Activated naive CD4-positive, alpha-beta T cell treated with anti-CD3 and anti-CD28 coated beads, Interleukin-2, amount 10 ng/mL, durations not matched to agents 7 days and 5 days (primary cell): ENCODE measurements at regions of chr7 and their contacts with region 1.

Region 1: DNA sequence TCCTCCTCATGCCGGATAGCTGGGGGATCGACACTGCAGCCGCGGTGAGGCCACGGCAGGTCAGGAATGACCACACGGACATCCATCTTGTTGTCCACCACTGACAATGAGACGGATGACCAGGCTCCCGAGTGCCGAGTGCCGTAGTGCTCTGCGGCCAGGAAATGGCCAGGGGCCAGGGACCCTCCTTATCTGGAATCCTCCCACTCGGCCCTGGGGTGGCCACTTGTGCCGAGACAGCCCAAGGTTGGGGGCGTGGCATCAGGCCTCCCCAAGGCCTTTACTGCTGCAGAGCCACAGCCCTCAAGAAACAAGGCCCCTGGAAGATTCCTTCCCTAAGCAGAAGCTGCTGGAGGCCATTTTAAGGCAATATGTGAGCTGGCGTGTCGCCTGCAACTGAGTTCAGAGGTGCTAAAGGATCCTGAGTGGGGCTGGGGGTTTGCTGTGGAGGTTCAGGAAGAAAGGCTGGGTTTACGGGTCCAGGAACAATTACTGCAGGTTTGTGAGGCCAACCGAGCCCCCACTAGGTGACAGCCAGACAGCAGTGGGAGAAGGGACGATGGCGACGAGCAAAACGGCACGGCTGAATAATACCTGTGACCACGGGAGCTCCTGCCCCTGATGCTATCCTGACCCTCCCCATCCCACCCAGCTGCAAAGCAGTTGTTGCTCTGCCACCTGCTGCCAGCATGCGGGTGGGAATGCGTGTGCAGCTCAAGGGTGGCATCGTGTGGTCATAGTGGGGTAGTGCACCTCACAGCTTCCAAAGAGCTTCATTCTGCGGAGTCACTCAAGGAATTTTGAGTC is 31.6 kb upstream of the LEP start:
- DNase-seq: peak; percentile 74
- H3K4me3 Mint-ChIP-seq: no peak overlapping the region
- H3K27ac Mint-ChIP-seq: no peak overlapping the region
- H3K4me1 Mint-ChIP-seq: no peaks in the 10 kb centered on the region
- H3K27me3 Mint-ChIP-seq: peaks cover 50% of the 10 kb centered on the region

Region 2: GRCh38 chr7:128035712-128036111 is 173.7 kb before region 1 on chr7:
- CTCF ChIA-PET with region 1: interaction called, 33 read pairs
- DNase-seq: no peak
- H3K4me3 Mint-ChIP-seq: no peak overlapping the region
- H3K27ac Mint-ChIP-seq: no peak overlapping the region
- H3K4me1 Mint-ChIP-seq: peaks cover 6% of the 10 kb centered on the region
- H3K27me3 Mint-ChIP-seq: peaks cover 34% of the 10 kb centered on the region

Region 3: DNA sequence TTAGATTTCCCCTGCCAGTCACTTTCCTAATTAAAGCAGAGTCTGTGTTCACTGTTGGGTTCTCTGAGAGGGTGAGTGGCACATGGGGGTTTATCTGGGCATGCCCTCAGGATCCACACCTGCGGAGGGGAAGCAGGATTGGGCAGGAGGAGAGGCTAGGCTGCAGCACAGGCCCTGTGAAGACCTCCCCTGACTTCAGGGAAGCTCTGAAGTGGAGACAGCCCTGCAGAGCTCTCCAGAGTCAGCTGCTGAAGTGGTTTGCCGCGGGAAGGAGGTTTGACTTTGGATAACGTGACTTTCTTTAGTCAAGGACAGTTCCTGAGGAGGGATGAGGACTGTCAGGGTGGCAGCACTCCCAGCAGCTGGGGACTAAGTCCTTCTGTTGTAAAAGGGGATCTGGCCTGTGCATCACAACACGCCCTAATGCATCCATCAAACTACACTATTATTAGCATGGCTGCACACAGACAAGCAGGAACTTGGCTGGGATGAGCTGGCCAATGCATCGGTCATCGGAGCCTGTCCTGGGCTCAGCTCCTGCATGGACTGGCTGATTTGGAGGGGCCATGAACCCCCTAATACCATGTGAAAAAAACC is 19.3 kb before region 1 on chr7:
- CTCF ChIA-PET with region 1: interaction called, 15 read pairs
- DNase-seq: no peak
- H3K4me3 Mint-ChIP-seq: no peak overlapping the region
- H3K27ac Mint-ChIP-seq: no peak overlapping the region
- H3K4me1 Mint-ChIP-seq: no peaks in the 10 kb centered on the region
- H3K27me3 Mint-ChIP-seq: peaks cover 45% of the 10 kb centered on the region

Region 4: GRCh38 chr7:128227271-128227670 is 17.8 kb after region 1 on chr7:
- CTCF ChIA-PET with region 1: interaction called, 10 read pairs
- DNase-seq: no peak
- H3K4me3 Mint-ChIP-seq: no peak overlapping the region
- H3K27ac Mint-ChIP-seq: no peak overlapping the region
- H3K4me1 Mint-ChIP-seq: no peaks in the 10 kb centered on the region
- H3K27me3 Mint-ChIP-seq: peaks cover 47% of the 10 kb centered on the region

Region 5: DNA sequence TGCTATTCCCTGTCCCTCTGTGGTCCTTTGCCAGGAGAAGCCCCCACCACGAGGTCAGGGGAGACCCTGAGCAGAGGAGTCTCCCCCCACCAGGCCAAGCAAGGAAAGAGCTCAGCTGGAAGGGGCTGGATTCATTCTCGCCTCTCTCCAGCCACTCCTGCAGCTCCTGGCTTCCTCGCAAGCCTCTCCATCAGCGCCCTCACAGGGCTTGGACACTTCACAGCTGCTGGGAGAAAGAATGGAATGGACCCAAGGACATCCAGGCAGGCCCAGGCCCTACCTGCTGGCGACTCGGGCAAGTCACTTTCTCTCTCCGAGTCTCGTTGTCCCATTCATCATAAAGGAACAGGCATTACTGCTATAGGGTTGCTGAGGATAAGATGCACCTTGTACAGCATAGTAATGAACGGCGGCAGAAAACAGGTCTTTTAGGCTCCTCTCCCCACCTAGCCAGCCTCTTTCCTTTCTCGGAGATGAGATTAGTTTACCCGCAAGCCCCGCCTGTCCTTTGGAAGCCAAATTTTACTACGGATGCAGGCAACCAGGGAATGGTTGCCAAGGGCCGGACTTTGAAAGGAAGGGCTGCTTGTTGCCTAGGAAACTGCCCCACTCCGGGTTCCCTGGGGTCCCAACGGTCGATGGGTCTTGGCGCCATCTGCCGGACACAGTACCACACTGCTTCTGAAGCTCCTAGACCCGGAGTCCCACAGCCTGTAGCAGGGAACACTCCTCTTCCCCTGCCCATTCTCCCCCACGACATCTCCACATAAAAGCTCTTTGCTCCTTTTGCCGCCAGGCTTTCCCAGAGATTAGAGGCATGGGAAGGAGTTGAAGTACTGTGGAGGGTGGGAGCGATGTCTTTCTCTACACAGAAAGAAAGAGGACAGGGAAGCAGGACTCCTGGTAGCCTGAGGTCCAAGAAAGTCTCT is 178.0 kb after region 1 on chr7:
- CTCF ChIA-PET with region 1: no interaction called
- DNase-seq: peak; percentile 78
- H3K4me3 Mint-ChIP-seq: no peak overlapping the region
- H3K27ac Mint-ChIP-seq: no peak overlapping the region
- H3K4me1 Mint-ChIP-seq: no peaks in the 10 kb centered on the region
- H3K27me3 Mint-ChIP-seq: peaks cover 42% of the 10 kb centered on the region